HCT116 (cell line): ENCODE measurements at regions of chr12 and their contacts with region 1.

Region 1: DNA sequence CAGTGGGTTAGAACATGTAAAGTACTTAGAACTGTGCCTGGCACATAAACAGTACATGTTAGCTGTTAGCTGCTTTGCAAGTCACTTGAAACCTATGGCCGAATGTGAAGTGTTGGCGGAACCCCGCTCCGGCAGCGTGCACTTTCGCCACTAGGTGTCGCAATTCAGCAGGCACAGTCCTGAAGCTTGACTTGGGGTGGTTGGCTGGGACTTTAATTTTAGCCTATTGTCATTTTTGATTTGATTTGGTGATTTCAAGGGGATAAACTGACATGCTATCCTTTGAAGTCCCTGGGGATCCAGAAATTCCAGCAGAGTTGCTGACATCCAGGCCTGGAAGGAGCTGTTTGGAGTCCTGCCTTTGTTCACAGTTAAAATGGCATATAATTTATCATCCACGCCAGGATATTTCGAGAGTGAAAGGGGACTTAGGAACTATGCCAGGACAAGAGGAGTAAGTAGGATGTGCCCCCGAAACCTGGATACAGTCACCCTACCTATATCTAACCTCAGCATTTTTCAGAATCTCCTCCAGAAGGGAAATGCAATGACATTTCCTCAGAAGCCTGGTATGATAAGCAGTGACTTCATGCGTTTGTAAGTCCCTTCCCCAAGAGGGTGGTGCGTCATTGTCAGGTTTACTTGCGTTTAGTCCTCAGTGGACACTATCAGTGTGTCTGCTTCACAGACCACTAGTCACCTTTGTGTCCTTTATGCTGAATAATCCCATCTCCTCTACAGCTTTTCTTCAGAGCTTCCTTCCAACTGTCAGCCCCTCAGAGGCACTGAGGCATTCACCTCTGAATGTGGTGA is 3.5 kb upstream of the TSPAN9 start:
- DNase-seq: peak; percentile 72
- ATAC-seq: peak; percentile 61
- H3K4me3 ChIP-seq: no peak overlapping the region
- H3K27ac ChIP-seq: no peak overlapping the region
- H3K4me1 ChIP-seq: peaks cover 11 to 27% of the 10 kb centered on the region in 2 experiments; a peak in 3 of 4 replicates
- H3K27me3 ChIP-seq: no peaks in the 10 kb centered on the region; the same call in 1 of the 2 replicates
- CTCF ChIP-seq: peak; percentile 74 to 99 (median 99); a peak in 5 of 6 replicates
- POLR2A ChIP-seq: no peak
- RAD21 ChIP-seq: peak; percentile 83

Region 2: GRCh38 chr12:2944401-2945047 is 129.1 kb before region 1 on chr12:
- CTCF ChIA-PET with region 1: no interaction called
- POLR2A ChIA-PET with region 1: no interaction called
- RAD21 ChIA-PET with region 1: no interaction called
- intact Hi-C with region 1: no loop called
- DNase-seq: peak; percentile 34
- ATAC-seq: peak; percentile 95
- H3K4me3 ChIP-seq: no peak overlapping the region
- H3K27ac ChIP-seq: no peak overlapping the region
- H3K4me1 ChIP-seq: peaks cover 2 to 11% of the 10 kb centered on the region in 2 experiments; a peak in 2 of 4 replicates
- H3K27me3 ChIP-seq: no peaks in the 10 kb centered on the region
- CTCF ChIP-seq: peak; percentile 86 to 97 (median 92)
- POLR2A ChIP-seq: no peak
- RAD21 ChIP-seq: peak; percentile 84

Region 3: GRCh38 chr12:3202734-3203446 is 129.2 kb after region 1 on chr12:
- CTCF ChIA-PET with region 1: interaction called, 3 read pairs
- POLR2A ChIA-PET with region 1: no interaction called
- RAD21 ChIA-PET with region 1: no interaction called
- intact Hi-C with region 1: loop called (anchors 1 kb)
- DNase-seq: no peak
- ATAC-seq: peak; percentile 67
- H3K4me3 ChIP-seq: no peak overlapping the region
- H3K27ac ChIP-seq: no peak overlapping the region
- H3K4me1 ChIP-seq: peaks cover 0 to 16% of the 10 kb centered on the region in 2 experiments; a peak in 2 of 4 replicates
- H3K27me3 ChIP-seq: no peaks in the 10 kb centered on the region
- CTCF ChIP-seq: peak; percentile 65 to 99 (median 95); a peak in 5 of 6 replicates
- POLR2A ChIP-seq: no peak
- RAD21 ChIP-seq: peak; percentile 61

Region 4: GRCh38 chr12:3275171-3276041 is 201.8 kb after region 1 on chr12:
- CTCF ChIA-PET with region 1: interaction called, 39 read pairs
- POLR2A ChIA-PET with region 1: no interaction called
- RAD21 ChIA-PET with region 1: interaction called, 5 to 7 read pairs
- intact Hi-C with region 1: loop called (anchors 1 kb)
- DNase-seq: peak; percentile 24
- ATAC-seq: peak; percentile 82
- H3K4me3 ChIP-seq: no peak overlapping the region
- H3K27ac ChIP-seq: no peak overlapping the region
- H3K4me1 ChIP-seq: peaks cover 7 to 28% of the 10 kb centered on the region in 2 experiments
- H3K27me3 ChIP-seq: no peaks in the 10 kb centered on the region
- CTCF ChIP-seq: peak; percentile 87 to 97 (median 96)
- POLR2A ChIP-seq: no peak
- RAD21 ChIP-seq: peak; percentile 92

Region 5: GRCh38 chr12:3442397-3442796 is 368.8 kb after region 1 on chr12:
- CTCF ChIA-PET with region 1: no interaction called
- POLR2A ChIA-PET with region 1: no interaction called
- RAD21 ChIA-PET with region 1: no interaction called
- intact Hi-C with region 1: loop called (anchors 5 kb)
- DNase-seq: no peak
- ATAC-seq: no peak
- H3K4me3 ChIP-seq: no peak overlapping the region
- H3K27ac ChIP-seq: no peak overlapping the region
- H3K4me1 ChIP-seq: no peaks in the 10 kb centered on the region
- H3K27me3 ChIP-seq: no peaks in the 10 kb centered on the region
- CTCF ChIP-seq: no peak
- POLR2A ChIP-seq: no peak
- RAD21 ChIP-seq: no peak